Caco-2 (cell line): ENCODE measurements at regions of chr10 and their contacts with region 1.

Region 1: DNA sequence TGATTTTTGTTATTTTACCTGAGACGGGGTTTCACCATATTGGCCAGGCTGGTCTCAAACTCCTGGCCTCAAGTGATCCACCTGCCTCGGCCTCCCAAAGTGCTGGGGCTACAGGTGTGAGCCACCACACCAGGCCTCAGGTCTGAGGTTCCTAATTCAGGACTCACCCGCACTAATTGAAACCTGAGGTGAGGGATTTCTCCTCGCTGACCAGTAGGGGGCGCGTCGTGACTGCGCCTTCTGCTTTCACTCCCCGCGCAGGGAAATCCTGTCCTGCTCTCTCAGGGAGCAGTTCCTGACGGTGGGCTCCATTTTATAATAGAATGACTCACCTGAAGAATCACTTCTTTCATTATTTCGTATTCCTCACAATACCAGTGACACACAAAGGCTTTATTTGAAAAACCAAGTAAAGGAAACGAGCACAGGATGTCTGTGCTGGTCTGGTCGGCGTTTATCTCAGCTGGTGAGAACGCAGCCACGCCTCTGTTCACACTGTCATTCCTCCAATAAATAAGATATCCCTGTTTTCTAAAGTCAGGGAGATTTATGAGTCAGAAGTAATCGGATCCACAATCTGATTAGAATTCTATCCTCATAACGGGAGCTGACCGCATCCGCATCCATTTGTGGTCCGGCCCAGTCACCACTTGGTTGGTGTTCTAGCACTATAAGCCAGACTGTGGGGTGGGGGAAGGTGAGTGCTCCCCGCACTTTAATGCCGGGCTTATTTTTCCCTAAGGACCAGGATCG is 35.4 kb downstream of the BAG3 start:
- DNase-seq: peak; percentile 82 to 85
- H3K4me3 ChIP-seq: no peak overlapping the region
- H3K4me3 Mint-ChIP-seq: peak overlapping the region; percentile 63
- H3K27ac Mint-ChIP-seq: peak overlapping the region; percentile 60
- H3K4me1 ChIP-seq: peaks cover 32% of the 10 kb centered on the region
- H3K4me1 Mint-ChIP-seq: peaks cover 32% of the 10 kb centered on the region
- H3K27me3 ChIP-seq: no peaks in the 10 kb centered on the region
- H3K27me3 Mint-ChIP-seq: no peaks in the 10 kb centered on the region
- CTCF ChIP-seq: peak; percentile 83 to 98

Region 2: DNA sequence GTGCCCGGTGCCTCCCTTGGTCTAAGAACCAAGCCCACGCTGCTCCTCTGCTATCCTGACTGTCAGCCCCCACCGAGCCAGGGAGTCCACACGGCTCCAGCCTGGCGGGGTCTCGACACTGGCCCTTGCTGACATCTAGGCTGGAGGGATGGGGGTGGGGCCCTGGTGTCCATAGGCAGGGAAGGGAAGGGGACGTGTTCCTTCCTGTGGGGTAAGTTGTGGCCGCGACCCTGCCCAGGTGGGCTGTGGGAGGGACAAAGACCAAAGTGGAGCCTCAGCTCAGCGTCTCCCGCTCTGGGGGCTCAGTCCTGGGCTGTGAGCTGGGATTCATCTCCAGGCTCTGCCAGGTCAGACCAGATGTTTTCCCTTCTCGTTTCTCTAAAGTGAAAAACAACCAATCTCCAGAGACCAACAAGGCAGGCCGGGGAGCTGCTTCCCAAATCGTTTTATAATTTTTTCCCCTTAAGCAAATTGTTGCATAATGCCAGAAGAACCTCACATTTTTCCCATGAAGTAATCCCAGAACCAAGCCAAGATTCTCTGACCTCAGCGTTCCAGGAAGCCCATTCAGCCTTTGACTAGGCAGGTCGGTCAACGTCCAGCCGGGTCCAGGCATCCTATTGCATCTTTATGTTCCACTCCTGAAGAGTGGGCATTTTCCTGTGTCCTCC is 245.3 kb before region 1 on chr10:
- CTCF ChIA-PET with region 1: no interaction called
- POLR2A ChIA-PET with region 1: no interaction called
- intact Hi-C with region 1: no loop called
- DNase-seq: no peak
- H3K4me3 ChIP-seq: no peak overlapping the region
- H3K4me3 Mint-ChIP-seq: no peak overlapping the region
- H3K27ac Mint-ChIP-seq: no peak overlapping the region
- H3K4me1 ChIP-seq: no peaks in the 10 kb centered on the region
- H3K4me1 Mint-ChIP-seq: no peaks in the 10 kb centered on the region
- H3K27me3 ChIP-seq: no peaks in the 10 kb centered on the region
- H3K27me3 Mint-ChIP-seq: no peaks in the 10 kb centered on the region
- CTCF ChIP-seq: no peak

Region 3: GRCh38 chr10:119596537-119597404 is 89.8 kb before region 1 on chr10 and contains the start of gene TIAL1:
- CTCF ChIA-PET with region 1: no interaction called
- POLR2A ChIA-PET with region 1: interaction called, 3 read pairs
- intact Hi-C with region 1: loop called (anchors 2 kb)
- DNase-seq: peak; percentile 98 to 99
- H3K4me3 ChIP-seq: peak within 1 kb of the TSS; percentile 98
- H3K4me3 Mint-ChIP-seq: peak within 1 kb of the TSS; percentile 92
- H3K27ac Mint-ChIP-seq: peak within 1 kb of the TSS; percentile 94
- H3K4me1 ChIP-seq: peaks cover 38% of the 10 kb centered on the region
- H3K4me1 Mint-ChIP-seq: peaks cover 23% of the 10 kb centered on the region
- H3K27me3 ChIP-seq: no peaks in the 10 kb centered on the region
- H3K27me3 Mint-ChIP-seq: no peaks in the 10 kb centered on the region
- CTCF ChIP-seq: no peak
- total RNA-seq, gene TIAL1: 162 and 174 TPM in 2 replicates

Region 4: GRCh38 chr10:119725828-119726675 is 39.4 kb after region 1 on chr10 and contains the start of gene INPP5F:
- CTCF ChIA-PET with region 1: interaction called, 20 read pairs
- POLR2A ChIA-PET with region 1: interaction called, 25 read pairs
- intact Hi-C with region 1: loop called (anchors 1 kb)
- DNase-seq: peak; percentile 100
- H3K4me3 ChIP-seq: peak within 1 kb of the TSS; percentile 82
- H3K4me3 Mint-ChIP-seq: peak within 1 kb of the TSS; percentile 91
- H3K27ac Mint-ChIP-seq: peak within 1 kb of the TSS; percentile 90
- H3K4me1 ChIP-seq: peaks cover 40% of the 10 kb centered on the region
- H3K4me1 Mint-ChIP-seq: peaks cover 47% of the 10 kb centered on the region
- H3K27me3 ChIP-seq: no peaks in the 10 kb centered on the region
- H3K27me3 Mint-ChIP-seq: no peaks in the 10 kb centered on the region
- CTCF ChIP-seq: peak in 1 of 2 experiments; percentile 24
- total RNA-seq, gene INPP5F: 26.4 and 26.9 TPM in 2 replicates

Region 5: DNA sequence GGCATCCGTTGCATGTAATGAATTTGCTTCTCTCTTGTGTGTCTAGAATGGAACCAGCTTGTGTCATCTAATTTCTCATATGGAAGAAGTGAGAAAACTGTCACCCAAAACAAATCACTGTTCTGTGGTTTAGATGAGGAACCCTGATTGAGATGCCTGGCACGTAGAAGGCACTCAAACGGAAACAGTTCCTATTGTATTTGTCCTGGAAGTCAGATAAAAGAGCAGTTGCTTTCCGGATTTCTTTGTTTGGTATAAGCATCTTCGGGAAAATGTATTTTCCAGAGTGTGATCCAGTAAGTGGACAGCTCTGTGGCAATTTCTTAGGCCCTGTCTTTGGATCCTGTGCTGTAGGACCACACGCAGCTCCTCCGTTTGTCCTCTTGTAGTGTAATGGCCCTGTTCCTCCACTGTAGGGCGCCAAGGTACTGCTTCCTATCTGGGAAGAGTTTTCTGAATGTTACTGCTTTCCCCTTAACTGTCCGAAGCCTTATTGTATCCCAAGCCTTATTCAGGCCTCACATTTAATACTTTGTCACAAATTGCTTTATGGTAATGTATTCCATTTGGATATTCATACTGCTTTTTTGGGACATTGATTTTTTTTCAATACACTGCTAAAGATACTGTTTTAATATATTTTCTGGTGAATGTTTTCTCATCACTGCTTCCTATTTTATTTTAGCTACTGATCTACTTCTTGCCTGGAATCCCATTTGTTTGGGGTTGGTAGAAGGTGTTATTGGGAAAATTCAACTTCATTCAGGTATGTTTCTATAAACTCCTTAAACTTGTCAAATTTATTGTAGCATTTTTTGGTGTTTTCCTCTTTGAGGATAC is 64.0 kb after region 1 on chr10:
- CTCF ChIA-PET with region 1: interaction called, 25 read pairs
- POLR2A ChIA-PET with region 1: no interaction called
- intact Hi-C with region 1: loop called (anchors 1 kb)
- DNase-seq: peak; percentile 76 to 82
- H3K4me3 ChIP-seq: no peak overlapping the region
- H3K4me3 Mint-ChIP-seq: no peak overlapping the region
- H3K27ac Mint-ChIP-seq: peak overlapping the region; percentile 7
- H3K4me1 ChIP-seq: peaks cover 14% of the 10 kb centered on the region; the same call in 1 of the 2 replicates
- H3K4me1 Mint-ChIP-seq: peaks cover 25% of the 10 kb centered on the region
- H3K27me3 ChIP-seq: no peaks in the 10 kb centered on the region
- H3K27me3 Mint-ChIP-seq: no peaks in the 10 kb centered on the region
- CTCF ChIP-seq: peak; percentile 90 to 96

Region 6: DNA sequence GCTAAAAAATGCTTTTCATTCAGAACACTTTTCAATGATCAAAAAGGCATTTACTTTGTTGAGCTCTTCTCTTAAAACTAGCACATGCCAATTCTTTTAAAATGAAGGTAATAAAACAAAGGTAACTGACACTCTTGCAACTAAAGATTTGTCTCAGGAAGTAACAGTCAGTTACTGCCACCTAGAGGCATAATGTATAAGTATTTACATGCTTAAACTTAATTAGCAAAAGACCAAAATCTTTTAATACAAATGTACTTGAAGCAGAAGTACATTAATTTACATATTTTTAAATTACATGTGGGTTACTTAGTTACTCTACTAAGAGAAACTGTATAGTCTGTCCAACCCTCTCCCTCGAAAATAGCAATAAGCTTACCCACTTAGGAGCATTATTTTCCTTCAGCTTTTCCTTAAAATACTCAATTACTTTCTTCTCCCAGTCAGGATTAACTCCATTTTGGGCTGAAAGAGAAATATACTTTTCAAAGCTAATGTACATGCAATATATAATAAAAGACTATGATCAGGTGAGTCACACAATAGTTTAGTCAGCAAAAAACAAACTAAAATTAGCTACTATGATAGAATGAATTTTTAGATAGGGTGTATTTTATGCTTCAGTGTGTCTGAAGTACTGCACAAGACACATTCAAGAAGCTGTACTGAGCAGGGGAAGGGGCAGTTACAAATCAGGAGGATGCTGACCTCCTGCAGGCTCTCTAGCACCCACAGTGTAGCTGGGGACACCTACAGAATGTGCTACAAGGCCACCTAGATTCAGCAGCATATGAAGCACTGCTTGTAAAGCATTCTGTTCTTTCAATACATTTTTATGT is 173.0 kb after region 1 on chr10:
- CTCF ChIA-PET with region 1: interaction called, 15 read pairs
- POLR2A ChIA-PET with region 1: no interaction called
- intact Hi-C with region 1: loop called (anchors 1 kb)
- DNase-seq: peak in 1 of 2 experiments; percentile 34
- H3K4me3 ChIP-seq: no peak overlapping the region
- H3K4me3 Mint-ChIP-seq: no peak overlapping the region
- H3K27ac Mint-ChIP-seq: peak overlapping the region; percentile 45
- H3K4me1 ChIP-seq: peaks cover 14% of the 10 kb centered on the region; the same call in 1 of the 2 replicates
- H3K4me1 Mint-ChIP-seq: peaks cover 13% of the 10 kb centered on the region
- H3K27me3 ChIP-seq: no peaks in the 10 kb centered on the region
- H3K27me3 Mint-ChIP-seq: no peaks in the 10 kb centered on the region
- CTCF ChIP-seq: peak; percentile 44 to 45

Region 7: GRCh38 chr10:120336911-120337540 is 650.4 kb after region 1 on chr10:
- CTCF ChIA-PET with region 1: interaction called, 3 read pairs
- POLR2A ChIA-PET with region 1: no interaction called
- intact Hi-C with region 1: loop called (anchors 2 kb)
- DNase-seq: peak; percentile 49 to 66
- H3K4me3 ChIP-seq: no peak overlapping the region
- H3K4me3 Mint-ChIP-seq: no peak overlapping the region
- H3K27ac Mint-ChIP-seq: no peak overlapping the region
- H3K4me1 ChIP-seq: no peaks in the 10 kb centered on the region
- H3K4me1 Mint-ChIP-seq: no peaks in the 10 kb centered on the region
- H3K27me3 ChIP-seq: no peaks in the 10 kb centered on the region; the same call in 1 of the 2 replicates
- H3K27me3 Mint-ChIP-seq: peaks cover 21% of the 10 kb centered on the region
- CTCF ChIP-seq: peak; percentile 83